ENCODE measurements at regions of chr9 and their contacts with region 1.

Region 1: DNA sequence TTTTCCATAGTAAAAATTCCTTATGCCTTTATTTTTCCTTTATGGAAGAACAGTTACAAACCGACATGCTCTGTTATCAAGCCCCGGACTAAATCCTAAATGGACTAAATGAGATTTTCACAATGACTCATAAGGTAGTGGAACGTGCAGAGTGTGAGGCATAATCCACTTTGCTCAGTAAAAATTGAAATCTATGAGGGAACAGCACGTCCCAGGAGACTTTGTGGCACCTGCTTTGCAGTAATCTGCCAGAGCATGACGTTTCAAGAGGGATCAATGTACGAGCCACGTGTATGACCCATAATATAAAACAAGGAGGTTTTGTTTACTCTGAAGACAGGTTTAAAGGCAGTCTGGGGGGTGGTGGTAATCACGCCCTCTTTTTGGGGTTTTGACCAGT is 83.8 kb upstream of the GNA14 start:
- DNase-seq: no peak
- ATAC-seq: no peak
- H3K4me3 ChIP-seq: no peak overlapping the region
- H3K4me3 Mint-ChIP-seq: no peak overlapping the region
- H3K27ac ChIP-seq: no peak overlapping the region
- H3K27ac Mint-ChIP-seq: no peak overlapping the region
- H3K4me1 ChIP-seq: no peaks in the 10 kb centered on the region
- H3K4me1 Mint-ChIP-seq: peaks cover 6% of the 10 kb centered on the region
- H3K27me3 ChIP-seq: no peaks in the 10 kb centered on the region
- H3K27me3 Mint-ChIP-seq: no peaks in the 10 kb centered on the region
- CTCF ChIP-seq: no peak

Region 2: DNA sequence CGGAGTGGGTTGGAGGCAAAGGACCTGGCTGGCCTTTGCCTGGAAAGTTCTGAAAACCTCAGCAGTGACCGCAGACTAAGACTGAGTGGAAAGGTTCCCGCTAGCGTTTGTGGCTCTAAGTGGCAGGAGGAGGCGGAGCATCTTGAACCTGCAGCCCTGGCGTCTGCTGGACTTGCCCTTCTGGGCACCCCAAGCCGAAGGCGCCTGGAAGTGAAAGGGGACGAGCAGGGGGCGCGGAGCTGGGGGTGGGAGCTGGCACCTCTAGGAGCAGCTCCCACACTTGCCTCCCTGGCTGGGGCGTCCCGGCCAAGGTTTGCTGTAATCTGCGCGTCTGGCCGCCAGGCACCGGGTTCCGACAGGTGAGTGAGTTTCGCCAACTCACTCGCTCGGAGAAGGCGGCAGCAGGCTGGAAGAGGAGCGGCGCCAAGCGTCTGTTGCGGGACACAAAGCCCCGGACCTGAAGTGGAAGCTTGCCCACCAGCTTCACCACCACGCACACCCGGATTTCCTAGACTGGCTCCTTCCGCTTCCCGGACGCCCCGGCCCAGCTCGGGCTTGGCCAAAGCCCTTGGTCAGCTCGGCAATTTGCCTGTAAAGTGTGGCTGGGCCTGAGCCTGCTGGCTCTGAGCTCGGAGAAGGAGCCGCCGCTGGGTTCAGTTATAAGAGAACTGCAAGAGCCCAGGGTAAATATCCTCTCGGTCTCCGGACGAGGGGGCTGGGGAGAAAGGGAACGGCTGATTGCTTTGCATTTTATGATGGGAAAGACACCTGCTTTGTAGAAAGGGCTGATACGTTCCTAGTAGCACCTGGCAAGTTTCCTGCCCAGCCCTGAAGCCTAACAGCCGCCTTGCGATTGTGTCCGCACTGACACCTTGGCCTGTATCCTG is 83.5 kb before region 1 on chr9 and contains the start of gene GNA14:
- CTCF ChIA-PET with region 1: no interaction called
- POLR2A ChIA-PET with region 1: no interaction called
- intact Hi-C with region 1: no loop called
- DNase-seq: no peak
- ATAC-seq: no peak
- H3K4me3 ChIP-seq: no peak within 1 kb of the TSS
- H3K4me3 Mint-ChIP-seq: peak within 1 kb of the TSS; percentile 53
- H3K27ac ChIP-seq: no peak within 1 kb of the TSS
- H3K27ac Mint-ChIP-seq: no peak within 1 kb of the TSS
- H3K4me1 ChIP-seq: no peaks in the 10 kb centered on the region
- H3K4me1 Mint-ChIP-seq: peaks cover 12% of the 10 kb centered on the region
- H3K27me3 ChIP-seq: peaks cover 3 to 4% of the 10 kb centered on the region in 2 experiments
- H3K27me3 Mint-ChIP-seq: peaks cover 33% of the 10 kb centered on the region
- CTCF ChIP-seq: no peak
- total RNA-seq, gene GNA14: not detected

Region 3: DNA sequence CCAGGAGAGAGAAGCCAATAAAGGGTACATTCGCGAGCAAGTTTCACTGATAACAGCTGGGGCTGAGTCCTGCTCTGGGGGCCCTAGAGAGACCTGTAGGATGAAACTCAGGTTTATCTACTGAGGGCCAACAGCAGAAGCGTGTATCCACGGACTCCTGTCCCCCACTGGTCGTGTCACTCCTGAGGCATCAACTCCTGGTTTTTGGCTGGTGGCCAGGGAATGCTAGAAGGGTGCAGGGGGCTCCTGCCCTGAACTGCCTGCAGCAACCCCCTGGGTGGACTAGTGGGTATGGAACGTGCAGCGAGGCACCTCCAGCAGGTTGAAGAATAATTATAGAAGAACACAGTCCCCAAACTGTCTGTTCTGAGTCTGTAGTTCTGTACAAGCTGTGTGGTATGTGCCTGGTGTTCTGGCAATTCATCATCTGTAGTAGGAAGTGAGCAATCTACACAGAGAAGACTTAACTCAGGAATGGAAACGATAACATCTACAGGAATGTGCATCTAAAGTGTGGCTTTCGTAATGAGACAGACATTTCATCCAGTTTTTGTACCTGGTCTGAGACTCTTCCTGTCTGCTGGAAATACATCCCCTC is 19.3 kb before region 1 on chr9:
- CTCF ChIA-PET with region 1: no interaction called
- POLR2A ChIA-PET with region 1: no interaction called
- intact Hi-C with region 1: loop called in 1 of 2 experiments (anchors 1 kb)
- DNase-seq: no peak
- ATAC-seq: no peak
- H3K4me3 ChIP-seq: no peak overlapping the region
- H3K4me3 Mint-ChIP-seq: no peak overlapping the region
- H3K27ac ChIP-seq: no peak overlapping the region
- H3K27ac Mint-ChIP-seq: no peak overlapping the region
- H3K4me1 ChIP-seq: no peaks in the 10 kb centered on the region
- H3K4me1 Mint-ChIP-seq: no peaks in the 10 kb centered on the region
- H3K27me3 ChIP-seq: no peaks in the 10 kb centered on the region
- H3K27me3 Mint-ChIP-seq: no peaks in the 10 kb centered on the region
- CTCF ChIP-seq: no peak

Measured in CD8-positive, alpha-beta T cell (primary cell).